Activated naive CD4-positive, alpha-beta T cell treated with anti-CD3 and anti-CD28 coated beads for 36 hours (primary cell): ENCODE measurements at regions of chr2 and their contacts with region 1.

Region 1: DNA sequence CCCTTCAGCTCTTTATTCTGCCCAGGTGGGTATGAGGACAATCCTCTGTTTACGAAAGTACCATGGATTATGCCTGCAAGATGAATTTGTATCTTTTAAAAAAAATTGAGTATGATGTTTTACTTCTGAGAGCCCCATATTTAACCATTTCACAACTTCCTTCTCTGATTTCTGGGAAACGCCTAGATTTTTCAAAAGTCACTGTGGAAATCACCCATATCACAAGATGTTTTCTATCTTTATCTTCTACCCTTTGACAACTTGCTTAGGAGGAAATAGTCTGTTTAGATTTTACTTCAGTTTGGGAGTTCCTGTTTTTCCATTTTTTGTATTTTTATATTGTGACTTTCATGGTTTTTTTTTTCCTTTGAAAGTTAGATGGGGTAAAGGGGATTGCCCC is 53.0 kb downstream of the ICOS start:
- DNase-seq: no peak
- H3K4me3 Mint-ChIP-seq: no peak overlapping the region
- H3K27ac Mint-ChIP-seq: peak overlapping the region; percentile 80
- H3K4me1 Mint-ChIP-seq: peaks cover 14% of the 10 kb centered on the region
- H3K27me3 Mint-ChIP-seq: no peaks in the 10 kb centered on the region

Region 2: DNA sequence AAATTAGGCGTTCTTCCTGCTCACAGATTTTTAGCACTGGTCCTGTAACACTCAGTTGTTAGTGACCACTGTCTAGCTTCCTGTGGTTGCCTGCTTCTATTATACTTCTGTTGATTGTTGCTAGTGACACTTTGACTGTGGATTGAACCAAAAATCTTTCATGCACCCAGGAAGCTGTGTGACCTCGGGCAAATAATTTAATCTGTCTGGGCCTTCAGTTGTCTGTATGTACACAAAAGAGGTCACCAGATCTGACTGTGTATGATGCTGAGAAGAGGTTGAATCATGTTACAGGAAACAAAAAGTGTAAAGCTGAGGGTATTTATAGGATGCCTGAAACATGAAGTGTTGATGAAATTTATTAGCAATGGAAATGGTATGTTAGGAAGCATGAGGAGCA is 40.3 kb before region 1 on chr2:
- CTCF ChIA-PET with region 1: no interaction called
- intact Hi-C with region 1: loop called (anchors 1 kb)
- DNase-seq: no peak
- H3K4me3 Mint-ChIP-seq: peak overlapping the region; percentile 42
- H3K27ac Mint-ChIP-seq: peak overlapping the region; percentile 70
- H3K4me1 Mint-ChIP-seq: peaks cover 87% of the 10 kb centered on the region
- H3K27me3 Mint-ChIP-seq: no peaks in the 10 kb centered on the region

Region 3: DNA sequence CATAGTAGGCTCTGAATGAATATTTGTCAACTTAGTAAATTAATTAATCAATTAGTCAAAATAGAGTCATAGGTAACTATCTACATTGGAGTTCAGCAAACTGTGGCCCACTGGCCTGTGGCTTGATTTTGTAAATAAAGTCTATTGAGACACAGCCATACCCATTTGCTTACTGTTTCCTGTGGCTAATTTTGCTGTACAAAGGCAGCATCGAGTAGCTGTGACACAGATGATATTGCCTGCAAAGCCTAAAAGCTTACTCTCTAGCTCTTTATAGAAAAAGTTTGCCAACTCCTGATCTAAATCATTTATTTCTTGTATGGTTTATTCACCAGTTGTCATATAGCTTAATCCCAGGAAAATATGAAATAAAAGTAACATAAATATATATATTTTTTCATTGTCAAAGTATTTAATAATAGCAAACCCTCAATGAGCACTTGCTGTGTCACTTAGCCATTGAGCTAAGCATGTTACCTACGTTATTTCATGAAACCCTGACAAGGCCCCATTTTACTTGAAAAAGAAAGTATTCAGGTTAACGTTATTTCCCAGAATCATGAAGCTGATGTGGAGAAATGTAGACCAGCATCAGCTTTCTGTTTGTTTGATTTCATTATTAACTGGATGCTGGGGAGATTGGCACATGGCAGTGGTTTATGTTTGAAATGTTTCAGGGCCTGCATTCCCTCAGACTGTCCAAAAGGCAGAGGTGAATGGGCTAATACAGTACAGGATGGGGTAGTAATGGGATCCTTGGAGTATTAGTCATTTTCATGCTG is 16.6 kb after region 1 on chr2:
- CTCF ChIA-PET with region 1: interaction called, 15 read pairs
- intact Hi-C with region 1: loop called (anchors 1 kb)
- DNase-seq: peak; percentile 40
- H3K4me3 Mint-ChIP-seq: no peak overlapping the region
- H3K27ac Mint-ChIP-seq: peak overlapping the region; percentile 96
- H3K4me1 Mint-ChIP-seq: peaks cover 95% of the 10 kb centered on the region
- H3K27me3 Mint-ChIP-seq: no peaks in the 10 kb centered on the region

Region 4: DNA sequence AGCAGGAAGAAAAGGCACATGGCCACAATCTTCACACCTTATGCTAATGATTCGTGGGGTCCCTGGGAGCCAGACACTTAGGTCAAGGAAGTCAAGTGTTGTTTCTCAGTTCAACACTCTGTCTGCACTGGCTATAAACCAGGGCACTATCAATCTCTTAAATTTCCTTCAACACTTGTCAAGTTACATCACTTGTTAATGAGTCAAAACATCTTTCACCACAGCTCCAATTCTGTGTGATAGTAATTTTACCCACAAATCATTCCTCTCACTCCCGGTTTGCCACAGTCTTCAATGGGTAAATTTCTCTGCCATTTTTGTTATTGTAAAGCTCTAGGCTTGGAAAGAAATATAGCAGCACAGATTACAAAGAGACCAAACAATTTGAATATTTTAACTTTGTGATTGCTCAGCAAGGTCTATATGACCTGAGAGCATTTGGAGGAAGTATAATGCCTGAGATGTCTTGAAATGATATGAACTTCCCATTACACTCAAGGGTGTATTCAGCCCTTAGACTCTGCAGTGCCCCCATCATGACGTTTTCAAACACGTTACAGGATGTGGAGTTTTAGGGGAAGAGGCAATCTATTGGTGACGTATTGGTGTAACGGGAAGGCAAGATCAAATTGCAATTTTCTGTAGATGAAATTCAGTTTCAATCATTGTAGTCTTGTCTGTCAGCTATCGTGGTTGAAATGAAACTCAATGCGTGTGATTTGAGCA is 25.8 kb after region 1 on chr2:
- CTCF ChIA-PET with region 1: interaction called, 5 read pairs
- intact Hi-C with region 1: loop called (anchors 1 kb)
- DNase-seq: peak; percentile 55
- H3K4me3 Mint-ChIP-seq: no peak overlapping the region
- H3K27ac Mint-ChIP-seq: peak overlapping the region; percentile 87
- H3K4me1 Mint-ChIP-seq: peaks cover 75% of the 10 kb centered on the region
- H3K27me3 Mint-ChIP-seq: no peaks in the 10 kb centered on the region

Region 5: DNA sequence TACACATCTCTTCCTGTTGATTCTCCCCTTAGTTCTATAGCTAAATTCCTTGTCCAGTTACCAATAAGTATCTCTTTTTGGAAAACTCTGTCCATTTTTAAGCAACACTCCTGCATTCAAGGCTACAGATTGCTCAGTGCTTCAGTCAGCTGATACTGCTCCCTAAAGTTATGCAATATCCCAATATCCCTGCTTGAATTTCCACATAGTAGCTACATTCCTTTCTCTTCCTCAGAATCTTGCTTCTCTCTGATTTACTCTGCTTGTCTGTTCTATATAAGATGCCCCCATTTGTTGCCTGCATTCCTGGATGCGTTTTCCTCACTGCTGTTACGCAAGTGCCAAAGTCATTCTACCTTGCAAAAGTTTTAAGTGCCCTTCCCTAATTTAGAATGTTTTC is 665.6 kb after region 1 on chr2:
- CTCF ChIA-PET with region 1: no interaction called
- intact Hi-C with region 1: no loop called
- DNase-seq: no peak
- H3K4me3 Mint-ChIP-seq: no peak overlapping the region
- H3K27ac Mint-ChIP-seq: no peak overlapping the region
- H3K4me1 Mint-ChIP-seq: no peaks in the 10 kb centered on the region
- H3K27me3 Mint-ChIP-seq: no peaks in the 10 kb centered on the region